GM10248 (cell line): ENCODE measurements at regions of chr7 and their contacts with region 1.

Region 1: GRCh38 chr7:73533742-73534141 is 11.6 kb upstream of the BAZ1B start:
- DNase-seq: no peak
- CTCF ChIP-seq: no peak

Region 2: DNA sequence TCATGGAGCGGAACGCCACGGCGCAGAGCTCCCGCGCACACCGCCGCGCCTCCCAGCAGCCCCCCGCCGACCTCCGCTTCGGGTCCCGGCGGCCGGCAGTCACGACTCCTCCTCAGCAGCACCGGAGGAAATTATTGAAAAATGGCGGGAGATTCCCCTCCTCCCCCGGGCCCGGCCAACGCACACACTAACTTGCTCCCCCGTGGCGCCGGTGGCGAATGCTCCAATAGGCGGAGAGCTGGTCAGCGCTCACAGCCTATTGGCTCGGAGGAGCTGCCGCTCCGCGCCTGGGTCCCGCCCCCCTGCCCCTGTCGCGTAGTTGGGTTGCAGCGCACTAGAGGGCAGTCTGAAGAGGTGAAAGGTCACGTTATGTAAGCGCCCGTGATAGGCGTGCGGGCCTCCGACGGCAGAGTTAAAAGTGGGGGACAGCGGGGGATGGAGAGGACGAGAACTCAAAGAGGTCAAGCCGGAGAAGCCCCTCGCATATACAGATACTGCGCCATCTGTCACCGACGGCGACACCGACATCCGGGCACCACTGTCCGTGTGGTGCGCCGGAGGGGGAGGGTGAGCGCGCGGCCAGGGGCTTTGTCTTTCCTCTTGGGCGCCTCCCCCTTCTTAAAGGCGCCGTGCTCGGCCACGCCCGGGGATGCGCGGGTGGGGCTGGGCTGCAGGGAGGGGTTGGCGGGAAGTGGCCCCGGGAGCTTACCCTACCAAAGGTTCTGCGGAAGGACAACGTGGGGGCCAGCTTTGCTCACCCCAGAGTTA is 11.5 kb before region 1 on chr7 and contains the start of gene BAZ1B:
- CTCF ChIA-PET with region 1: interaction called, 4 read pairs
- POLR2A ChIA-PET with region 1: interaction called, 10 read pairs
- DNase-seq: peak; percentile 98
- CTCF ChIP-seq: no peak